SK-N-SH (cell line): ENCODE measurements at regions of chr1 and their contacts with region 1.

Region 1: DNA sequence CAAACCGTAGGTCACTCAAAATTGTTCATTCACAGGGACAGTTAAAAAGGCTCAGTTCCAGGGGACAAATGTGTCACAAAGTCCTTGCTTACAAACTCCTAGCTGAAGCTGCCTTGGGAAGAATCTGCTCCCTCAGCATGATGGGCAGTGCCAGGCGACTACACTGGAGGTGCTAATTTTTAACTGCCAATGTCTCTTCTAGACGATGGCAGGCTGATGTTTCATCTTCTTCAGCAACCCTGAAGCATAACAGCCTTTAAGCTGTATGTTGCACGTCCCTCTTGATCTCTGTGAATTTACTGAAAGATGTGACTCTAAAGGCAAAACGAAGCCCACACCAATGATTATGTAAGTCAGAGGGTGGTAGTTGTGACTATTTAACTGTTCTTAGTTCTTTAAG is 11.3 kb downstream of the COA7 start:
- DNase-seq: no peak
- H3K4me3 ChIP-seq: no peak overlapping the region; a peak in 1 of 4 replicates
- H3K27ac ChIP-seq: no peak overlapping the region
- H3K4me1 ChIP-seq: no peaks in the 10 kb centered on the region
- H3K27me3 ChIP-seq: no peaks in the 10 kb centered on the region
- CTCF ChIP-seq: no peak
- EP300 ChIP-seq: no peak
- RAD21 ChIP-seq: no peak

Region 2: DNA sequence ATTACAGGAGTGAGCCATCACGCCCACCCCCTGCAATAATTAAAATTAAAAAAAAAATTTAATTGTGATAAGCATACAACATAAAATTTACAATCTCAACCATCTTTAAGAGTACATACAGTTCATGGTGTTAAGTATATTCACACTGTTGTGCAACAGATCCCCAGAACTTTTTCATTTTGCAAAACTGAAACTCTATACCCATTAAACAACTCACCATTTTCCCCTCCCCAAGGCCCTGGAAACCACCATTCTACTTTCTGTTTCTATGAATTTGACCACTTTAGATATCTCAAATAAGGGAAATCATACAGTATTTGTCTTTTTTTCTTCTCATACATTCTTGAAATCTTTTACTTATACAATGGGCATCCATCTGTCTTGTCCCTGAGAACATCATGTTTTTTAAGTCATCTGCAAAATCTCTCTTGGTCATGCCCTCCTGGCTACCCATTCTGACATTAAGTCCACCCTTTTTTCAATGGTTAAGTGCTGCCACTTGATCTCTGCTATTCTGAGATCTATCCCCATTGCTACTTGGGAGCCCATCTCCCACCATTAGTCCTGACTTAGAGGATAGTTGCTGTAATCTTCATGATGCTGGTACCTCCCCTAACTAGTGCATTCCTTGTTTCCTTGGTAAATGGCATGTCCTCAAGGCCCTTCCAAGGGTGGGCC is 584.4 kb before region 1 on chr1:
- CTCF ChIA-PET with region 1: no interaction called
- POLR2A ChIA-PET with region 1: no interaction called
- DNase-seq: no peak
- H3K4me3 ChIP-seq: no peak overlapping the region
- H3K27ac ChIP-seq: no peak overlapping the region
- H3K4me1 ChIP-seq: no peaks in the 10 kb centered on the region
- H3K27me3 ChIP-seq: no peaks in the 10 kb centered on the region
- CTCF ChIP-seq: no peak
- EP300 ChIP-seq: no peak
- RAD21 ChIP-seq: no peak

Region 3: GRCh38 chr1:52243221-52243987 is 443.4 kb before region 1 on chr1:
- CTCF ChIA-PET with region 1: no interaction called
- POLR2A ChIA-PET with region 1: no interaction called
- DNase-seq: no peak
- H3K4me3 ChIP-seq: no peak overlapping the region
- H3K27ac ChIP-seq: no peak overlapping the region
- H3K4me1 ChIP-seq: peaks cover 0 to 16% of the 10 kb centered on the region in 2 experiments; a peak in 3 of 4 replicates
- H3K27me3 ChIP-seq: no peaks in the 10 kb centered on the region
- CTCF ChIP-seq: no peak
- EP300 ChIP-seq: no peak
- RAD21 ChIP-seq: no peak

Region 4: DNA sequence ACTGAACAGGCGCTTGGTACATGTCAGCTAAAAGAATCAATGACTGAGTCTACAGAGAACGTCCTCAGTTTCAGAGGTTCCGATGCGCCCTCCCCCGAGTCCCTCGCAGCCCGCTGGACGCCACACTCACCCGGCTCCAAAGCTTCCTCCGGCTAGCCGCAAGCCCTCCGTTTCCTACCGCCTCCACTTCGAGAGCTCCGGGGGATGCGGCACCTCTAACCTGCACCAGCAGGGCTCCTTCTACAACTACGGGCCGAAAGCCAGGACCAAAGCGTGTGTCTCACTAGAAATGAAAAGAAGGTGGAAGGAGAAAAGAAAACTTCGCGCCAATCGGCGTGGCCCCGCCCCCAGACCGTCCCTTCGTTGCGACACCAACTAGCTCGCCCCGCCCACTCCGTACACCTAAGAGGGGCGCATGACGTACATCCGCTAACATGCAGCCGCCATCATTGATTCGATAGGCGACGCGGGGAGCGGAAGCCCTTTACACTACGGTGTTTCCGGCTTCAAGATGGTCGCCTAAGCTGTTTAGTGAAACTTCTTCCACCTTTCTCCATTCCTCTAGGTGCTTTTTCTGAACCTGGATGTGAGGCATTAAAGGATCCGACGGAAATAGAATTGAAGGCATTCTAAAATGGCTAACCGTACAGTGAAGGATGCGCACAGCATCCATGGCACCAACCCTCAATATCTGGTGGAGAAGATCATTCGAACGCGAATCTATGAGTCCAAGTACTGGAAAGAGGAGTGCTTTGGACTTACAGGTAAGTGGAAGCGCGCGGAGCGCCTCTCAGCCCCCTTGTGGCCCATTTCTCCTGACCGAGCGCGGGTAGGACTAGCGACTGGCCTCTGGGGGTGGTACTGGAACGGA is 282.5 kb before region 1 on chr1 and contains the starts of genes ORC1 and PRPF38A:
- CTCF ChIA-PET with region 1: interaction called, 14 read pairs
- POLR2A ChIA-PET with region 1: no interaction called
- DNase-seq: peak; percentile 94
- H3K4me3 ChIP-seq: peak within 1 kb of the TSS; percentile 92 to 97
- H3K27ac ChIP-seq: peak within 1 kb of the TSS; percentile 92 to 95
- H3K4me1 ChIP-seq: peaks cover 6 to 14% of the 10 kb centered on the region in 2 experiments; a peak in 2 of 4 replicates
- H3K27me3 ChIP-seq: no peaks in the 10 kb centered on the region
- CTCF ChIP-seq: peak; percentile 57
- EP300 ChIP-seq: no peak
- RAD21 ChIP-seq: no peak
- polyA plus RNA-seq, gene ORC1: 4.9 and 5.2 TPM in 2 replicates
- polyA plus RNA-seq, gene PRPF38A: 20.4 and 24.3 TPM in 2 replicates

Region 5: GRCh38 chr1:52552505-52553361 is 134.1 kb before region 1 on chr1 and contains the start of gene TUT4:
- CTCF ChIA-PET with region 1: interaction called, 15 read pairs
- POLR2A ChIA-PET with region 1: no interaction called
- DNase-seq: peak; percentile 91
- H3K4me3 ChIP-seq: peak within 1 kb of the TSS; percentile 89 to 95
- H3K27ac ChIP-seq: peak within 1 kb of the TSS; percentile 84 to 95
- H3K4me1 ChIP-seq: peaks cover 0 to 11% of the 10 kb centered on the region in 2 experiments
- H3K27me3 ChIP-seq: no peaks in the 10 kb centered on the region
- CTCF ChIP-seq: peak; percentile 25
- EP300 ChIP-seq: no peak
- RAD21 ChIP-seq: no peak
- polyA plus RNA-seq, gene TUT4: 27.2 and 28.3 TPM in 2 replicates

Region 6: GRCh38 chr1:52632732-52633290 is 54.0 kb before region 1 on chr1 and contains the start of gene SHISAL2A:
- CTCF ChIA-PET with region 1: no interaction called
- POLR2A ChIA-PET with region 1: no interaction called
- DNase-seq: peak; percentile 87
- H3K4me3 ChIP-seq: peak within 1 kb of the TSS; percentile 12 to 42; a peak in 2 of 4 replicates
- H3K27ac ChIP-seq: no peak within 1 kb of the TSS
- H3K4me1 ChIP-seq: peaks cover 0 to 9% of the 10 kb centered on the region in 2 experiments; a peak in 1 of 4 replicates
- H3K27me3 ChIP-seq: peaks cover 6% of the 10 kb centered on the region; the same call in 1 of the 2 replicates
- CTCF ChIP-seq: no peak
- EP300 ChIP-seq: no peak
- RAD21 ChIP-seq: no peak
- polyA plus RNA-seq, gene SHISAL2A: 0.07 TPM in 1 of 2 replicates, not detected in the other

Region 7: GRCh38 chr1:52669696-52670095 is 17.1 kb before region 1 on chr1:
- CTCF ChIA-PET with region 1: interaction called, 13 read pairs
- POLR2A ChIA-PET with region 1: no interaction called
- DNase-seq: no peak
- H3K4me3 ChIP-seq: no peak overlapping the region
- H3K27ac ChIP-seq: no peak overlapping the region
- H3K4me1 ChIP-seq: peaks cover 4% of the 10 kb centered on the region in 2 experiments; a peak in 2 of 4 replicates
- H3K27me3 ChIP-seq: no peaks in the 10 kb centered on the region
- CTCF ChIP-seq: no peak
- EP300 ChIP-seq: no peak
- RAD21 ChIP-seq: no peak

Region 8: GRCh38 chr1:52674497-52675384 is 12.1 kb before region 1 on chr1:
- CTCF ChIA-PET with region 1: interaction called, 13 read pairs
- POLR2A ChIA-PET with region 1: no interaction called
- DNase-seq: no peak
- H3K4me3 ChIP-seq: no peak overlapping the region
- H3K27ac ChIP-seq: no peak overlapping the region
- H3K4me1 ChIP-seq: peaks cover 4 to 7% of the 10 kb centered on the region in 2 experiments; a peak in 1 of 4 replicates
- H3K27me3 ChIP-seq: no peaks in the 10 kb centered on the region
- CTCF ChIP-seq: no peak
- EP300 ChIP-seq: no peak
- RAD21 ChIP-seq: no peak

Region 9: GRCh38 chr1:52697795-52698674 is 11.2 kb after region 1 on chr1 and contains the start of gene COA7:
- CTCF ChIA-PET with region 1: interaction called, 13 read pairs
- POLR2A ChIA-PET with region 1: no interaction called
- DNase-seq: peak; percentile 93
- H3K4me3 ChIP-seq: peak within 1 kb of the TSS; percentile 66 to 88
- H3K27ac ChIP-seq: peak within 1 kb of the TSS; percentile 64 to 81
- H3K4me1 ChIP-seq: peaks cover 0 to 8% of the 10 kb centered on the region in 2 experiments; a peak in 2 of 4 replicates
- H3K27me3 ChIP-seq: no peaks in the 10 kb centered on the region
- CTCF ChIP-seq: no peak
- EP300 ChIP-seq: no peak
- RAD21 ChIP-seq: no peak
- polyA plus RNA-seq, gene COA7: 9.0 and 13.7 TPM in 2 replicates